SK-N-SH (cell line): ENCODE measurements at regions of chr2 and their contacts with region 1.

Region 1: GRCh38 chr2:209334198-209335017 is 89.4 kb upstream of the MAP2 start:
- DNase-seq: peak; percentile 56
- H3K4me3 ChIP-seq: peak overlapping the region in 1 of 2 experiments; percentile 42; a peak in 1 of 4 replicates
- H3K27ac ChIP-seq: no peak overlapping the region
- H3K4me1 ChIP-seq: no peaks in the 10 kb centered on the region
- H3K27me3 ChIP-seq: no peaks in the 10 kb centered on the region
- CTCF ChIP-seq: peak; percentile 94
- EP300 ChIP-seq: no peak
- RAD21 ChIP-seq: peak; percentile 96

Region 2: GRCh38 chr2:208552930-208553329 is 781.5 kb before region 1 on chr2:
- CTCF ChIA-PET with region 1: no interaction called
- POLR2A ChIA-PET with region 1: no interaction called
- DNase-seq: no peak
- H3K4me3 ChIP-seq: no peak overlapping the region
- H3K27ac ChIP-seq: no peak overlapping the region
- H3K4me1 ChIP-seq: peaks cover 0 to 12% of the 10 kb centered on the region in 2 experiments; a peak in 2 of 4 replicates
- H3K27me3 ChIP-seq: no peaks in the 10 kb centered on the region
- CTCF ChIP-seq: no peak
- EP300 ChIP-seq: no peak
- RAD21 ChIP-seq: no peak

Region 3: DNA sequence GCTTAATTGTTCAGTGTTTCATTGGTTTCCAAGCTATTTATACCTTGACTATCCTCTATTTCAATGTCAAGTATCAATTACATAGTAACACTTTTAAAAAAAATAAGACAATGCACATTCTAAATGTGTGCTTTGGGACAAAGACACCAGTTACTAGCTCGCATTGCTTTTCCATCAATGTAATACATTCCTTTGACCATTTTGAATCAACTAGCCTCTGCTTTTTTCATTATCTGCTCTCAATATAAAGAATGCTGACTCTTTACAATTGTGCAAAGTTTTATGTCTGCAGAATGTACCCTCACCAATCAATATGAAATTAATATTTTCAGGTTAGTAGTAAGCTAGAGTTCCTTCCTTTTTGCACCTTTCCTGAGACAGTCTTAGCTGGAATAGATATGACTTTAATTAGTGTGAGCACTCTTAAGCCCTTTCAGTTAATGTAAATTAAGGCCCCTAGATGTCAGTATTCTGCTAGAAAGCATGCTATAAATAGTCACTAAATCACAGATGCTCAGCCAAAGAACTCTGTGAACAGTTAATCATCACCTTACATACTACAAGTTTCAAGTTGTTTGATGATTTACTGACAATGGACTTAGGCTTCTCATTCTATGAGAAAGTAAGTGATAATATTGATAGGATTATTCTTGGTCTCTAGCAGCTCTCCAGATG is 514.3 kb before region 1 on chr2:
- CTCF ChIA-PET with region 1: interaction called, 24 read pairs
- POLR2A ChIA-PET with region 1: no interaction called
- DNase-seq: peak; percentile 7
- H3K4me3 ChIP-seq: no peak overlapping the region; a peak in 1 of 4 replicates
- H3K27ac ChIP-seq: no peak overlapping the region
- H3K4me1 ChIP-seq: no peaks in the 10 kb centered on the region
- H3K27me3 ChIP-seq: no peaks in the 10 kb centered on the region
- CTCF ChIP-seq: 0 out of 2 replicates have a peak, but pooled peaks have one; percentile 20
- EP300 ChIP-seq: no peak
- RAD21 ChIP-seq: peak; percentile 68

Region 4: DNA sequence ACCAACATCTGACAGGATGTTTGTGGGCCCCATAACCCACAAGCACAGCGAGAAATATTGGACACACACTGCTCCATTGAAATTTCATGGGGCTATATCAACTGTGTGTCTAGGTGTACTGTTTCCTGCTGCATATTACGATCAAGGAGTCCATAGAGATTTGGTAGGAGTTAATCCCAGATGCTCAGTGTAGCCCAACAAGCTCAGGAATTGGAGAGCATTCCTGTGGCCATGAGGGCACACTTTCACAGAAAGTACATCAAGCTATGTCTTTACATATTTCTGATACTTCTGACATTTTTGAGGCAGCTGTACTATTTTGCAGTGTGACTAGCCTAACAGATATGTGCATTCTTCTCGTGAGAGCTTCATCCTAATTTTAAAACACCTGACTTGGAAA is 454.7 kb before region 1 on chr2:
- CTCF ChIA-PET with region 1: no interaction called
- POLR2A ChIA-PET with region 1: no interaction called
- DNase-seq: no peak
- H3K4me3 ChIP-seq: no peak overlapping the region
- H3K27ac ChIP-seq: no peak overlapping the region
- H3K4me1 ChIP-seq: no peaks in the 10 kb centered on the region
- H3K27me3 ChIP-seq: no peaks in the 10 kb centered on the region
- CTCF ChIP-seq: no peak
- EP300 ChIP-seq: no peak
- RAD21 ChIP-seq: no peak

Region 5: DNA sequence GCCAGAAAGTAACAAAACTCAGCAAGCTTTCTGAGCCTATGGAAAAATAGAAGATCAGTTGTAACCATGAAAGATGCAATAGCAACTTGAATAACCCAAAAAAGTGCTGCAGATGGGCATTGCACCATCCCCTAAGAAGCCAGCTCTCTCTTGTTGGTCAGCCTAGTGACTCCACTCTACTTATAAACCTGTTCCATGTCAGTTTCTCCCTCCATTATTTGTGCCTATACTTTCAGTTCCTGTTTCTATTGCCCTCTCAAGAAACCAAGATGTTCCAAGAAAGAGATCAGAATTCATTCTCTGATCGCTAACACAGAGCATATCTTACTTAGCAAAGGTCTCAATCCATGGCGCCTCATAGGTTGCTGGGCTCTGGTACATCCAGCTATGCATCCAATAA is 80.9 kb before region 1 on chr2:
- CTCF ChIA-PET with region 1: no interaction called
- POLR2A ChIA-PET with region 1: no interaction called
- DNase-seq: no peak
- H3K4me3 ChIP-seq: no peak overlapping the region
- H3K27ac ChIP-seq: no peak overlapping the region
- H3K4me1 ChIP-seq: no peaks in the 10 kb centered on the region
- H3K27me3 ChIP-seq: no peaks in the 10 kb centered on the region
- CTCF ChIP-seq: no peak
- EP300 ChIP-seq: no peak
- RAD21 ChIP-seq: no peak

Region 6: GRCh38 chr2:209277444-209277843 is 57.0 kb before region 1 on chr2:
- CTCF ChIA-PET with region 1: no interaction called
- POLR2A ChIA-PET with region 1: no interaction called
- DNase-seq: no peak
- H3K4me3 ChIP-seq: no peak overlapping the region
- H3K27ac ChIP-seq: no peak overlapping the region
- H3K4me1 ChIP-seq: no peaks in the 10 kb centered on the region
- H3K27me3 ChIP-seq: no peaks in the 10 kb centered on the region
- CTCF ChIP-seq: no peak
- EP300 ChIP-seq: no peak
- RAD21 ChIP-seq: no peak

Region 7: DNA sequence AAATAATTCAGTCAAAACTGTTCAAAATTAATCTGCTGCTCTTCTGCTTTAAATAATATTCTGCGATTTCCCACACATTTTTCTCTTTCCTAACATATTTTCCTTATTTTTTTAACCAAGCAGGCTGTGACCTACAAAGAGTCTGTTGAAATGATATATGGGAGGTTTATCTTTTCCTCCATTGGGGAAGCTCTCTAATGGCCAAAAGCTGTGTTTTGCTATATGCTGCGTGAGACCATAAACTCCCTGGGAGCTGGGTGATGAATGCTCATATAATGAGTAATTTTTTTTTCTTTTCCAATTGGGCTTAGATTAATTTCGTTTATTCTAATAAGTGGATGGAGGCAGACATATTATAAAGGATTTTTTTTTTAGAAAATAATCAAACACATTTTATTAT is 17.2 kb after region 1 on chr2:
- CTCF ChIA-PET with region 1: interaction called, 58 read pairs
- POLR2A ChIA-PET with region 1: no interaction called
- DNase-seq: no peak
- H3K4me3 ChIP-seq: no peak overlapping the region
- H3K27ac ChIP-seq: no peak overlapping the region
- H3K4me1 ChIP-seq: no peaks in the 10 kb centered on the region; a peak in 2 of 4 replicates
- H3K27me3 ChIP-seq: no peaks in the 10 kb centered on the region
- CTCF ChIP-seq: no peak
- EP300 ChIP-seq: no peak
- RAD21 ChIP-seq: no peak

Region 8: DNA sequence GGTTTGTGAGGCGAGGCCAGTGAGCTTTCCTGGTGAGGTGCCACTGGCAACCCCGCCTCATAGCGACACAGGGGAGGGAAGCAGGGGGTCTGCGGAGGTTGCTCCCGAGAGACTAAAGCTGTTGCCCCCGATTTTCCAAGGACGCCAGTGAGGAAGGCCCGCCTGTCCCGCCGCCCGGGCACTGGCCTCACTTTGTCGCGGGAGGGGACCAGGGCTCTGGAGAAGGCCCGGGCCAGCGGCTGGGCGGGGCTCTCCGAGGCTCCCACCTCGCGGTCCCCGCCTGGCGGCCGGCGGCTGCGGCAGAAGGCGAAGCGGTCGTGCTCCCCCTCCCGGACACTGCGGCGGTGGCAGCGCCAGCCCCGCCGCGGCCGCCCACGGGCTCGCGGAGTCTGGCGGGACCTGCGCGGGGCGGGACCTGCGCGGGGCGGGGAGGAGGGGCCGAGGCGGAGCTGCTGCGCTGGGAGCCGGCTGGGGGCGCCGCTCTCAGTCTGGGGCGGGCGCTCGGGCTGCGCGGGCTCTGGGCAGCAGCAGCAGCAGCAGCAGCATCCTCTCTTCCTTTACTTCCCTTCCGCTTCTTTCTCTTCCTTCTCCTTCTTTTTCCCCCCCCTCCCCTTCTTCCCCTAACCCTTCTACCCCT is 89.3 kb after region 1 on chr2 and contains the start of gene MAP2:
- CTCF ChIA-PET with region 1: interaction called, 135 read pairs
- POLR2A ChIA-PET with region 1: interaction called, 3 read pairs
- DNase-seq: peak; percentile 96
- H3K4me3 ChIP-seq: peak within 1 kb of the TSS; percentile 93 to 94
- H3K27ac ChIP-seq: peak within 1 kb of the TSS; percentile 24 to 53; a peak in 2 of 4 replicates
- H3K4me1 ChIP-seq: peaks cover 0 to 4% of the 10 kb centered on the region in 2 experiments; a peak in 3 of 4 replicates
- H3K27me3 ChIP-seq: no peaks in the 10 kb centered on the region
- CTCF ChIP-seq: peak; percentile 66
- EP300 ChIP-seq: no peak; a peak in 1 of 4 replicates
- RAD21 ChIP-seq: peak; percentile 63
- polyA plus RNA-seq, gene MAP2: 7.8 and 11.1 TPM in 2 replicates

Region 9: GRCh38 chr2:209577376-209578357 is 243.3 kb after region 1 on chr2:
- CTCF ChIA-PET with region 1: interaction called, 54 read pairs
- POLR2A ChIA-PET with region 1: interaction called, 3 read pairs
- DNase-seq: no peak
- H3K4me3 ChIP-seq: no peak overlapping the region; a peak in 1 of 4 replicates
- H3K27ac ChIP-seq: peak overlapping the region in 1 of 2 experiments; percentile 94; a peak in 2 of 4 replicates
- H3K4me1 ChIP-seq: peaks cover 4 to 14% of the 10 kb centered on the region in 2 experiments; a peak in 3 of 4 replicates
- H3K27me3 ChIP-seq: no peaks in the 10 kb centered on the region
- CTCF ChIP-seq: peak; percentile 67
- EP300 ChIP-seq: no peak
- RAD21 ChIP-seq: peak; percentile 54

Region 10: GRCh38 chr2:210195101-210195852 is 860.9 kb after region 1 on chr2:
- CTCF ChIA-PET with region 1: interaction called, 15 read pairs
- POLR2A ChIA-PET with region 1: no interaction called
- DNase-seq: peak; percentile 34
- H3K4me3 ChIP-seq: peak overlapping the region in 1 of 2 experiments; percentile 26; a peak in 1 of 4 replicates
- H3K27ac ChIP-seq: no peak overlapping the region
- H3K4me1 ChIP-seq: peaks cover 4 to 7% of the 10 kb centered on the region in 2 experiments; a peak in 3 of 4 replicates
- H3K27me3 ChIP-seq: no peaks in the 10 kb centered on the region
- CTCF ChIP-seq: peak; percentile 87
- EP300 ChIP-seq: no peak
- RAD21 ChIP-seq: peak; percentile 91